ENCODE measurements at regions of chr22 and their contacts with region 1.

Region 1: GRCh38 chr22:20229916-20230775 is 38.0 kb downstream of the RTN4R start:
- DNase-seq: no peak
- ATAC-seq: peak; percentile 32 to 55 (median 43)
- H3K4me3 ChIP-seq: no peak overlapping the region
- H3K27ac ChIP-seq: peak overlapping the region in 2 of 12 donors; percentile 5 to 22
- H3K4me1 ChIP-seq: peaks cover 0 to 30% (median 5%) of the 10 kb centered on the region in 12 donors
- H3K27me3 ChIP-seq: no peaks in the 10 kb centered on the region
- CTCF ChIP-seq: no peak
- POLR2A ChIP-seq: no peak

Region 2: GRCh38 chr22:20216863-20217499 is 13.2 kb before region 1 on chr22:
- intact Hi-C with region 1: loop called in 1 of 10 experiments (anchors 1 kb)
- DNase-seq: no peak
- ATAC-seq: no peak
- H3K4me3 ChIP-seq: no peak overlapping the region
- H3K27ac ChIP-seq: no peak overlapping the region
- H3K4me1 ChIP-seq: peaks cover 0 to 5% (median 2%) of the 10 kb centered on the region in 12 donors
- H3K27me3 ChIP-seq: no peaks in the 10 kb centered on the region
- CTCF ChIP-seq: no peak
- POLR2A ChIP-seq: no peak